ENCODE measurements at regions of chr12 and their contacts with region 1.

Region 1: GRCh38 chr12:50314629-50315312 is 31.5 kb upstream of the LIMA1 start:
- DNase-seq: no peak
- ATAC-seq: peak in 1 of 2 donors; percentile 53
- H3K4me3 ChIP-seq: no peak overlapping the region
- H3K27ac ChIP-seq: no peak overlapping the region
- H3K4me1 ChIP-seq: no peaks in the 10 kb centered on the region
- H3K27me3 ChIP-seq: no peaks in the 10 kb centered on the region

Region 2: DNA sequence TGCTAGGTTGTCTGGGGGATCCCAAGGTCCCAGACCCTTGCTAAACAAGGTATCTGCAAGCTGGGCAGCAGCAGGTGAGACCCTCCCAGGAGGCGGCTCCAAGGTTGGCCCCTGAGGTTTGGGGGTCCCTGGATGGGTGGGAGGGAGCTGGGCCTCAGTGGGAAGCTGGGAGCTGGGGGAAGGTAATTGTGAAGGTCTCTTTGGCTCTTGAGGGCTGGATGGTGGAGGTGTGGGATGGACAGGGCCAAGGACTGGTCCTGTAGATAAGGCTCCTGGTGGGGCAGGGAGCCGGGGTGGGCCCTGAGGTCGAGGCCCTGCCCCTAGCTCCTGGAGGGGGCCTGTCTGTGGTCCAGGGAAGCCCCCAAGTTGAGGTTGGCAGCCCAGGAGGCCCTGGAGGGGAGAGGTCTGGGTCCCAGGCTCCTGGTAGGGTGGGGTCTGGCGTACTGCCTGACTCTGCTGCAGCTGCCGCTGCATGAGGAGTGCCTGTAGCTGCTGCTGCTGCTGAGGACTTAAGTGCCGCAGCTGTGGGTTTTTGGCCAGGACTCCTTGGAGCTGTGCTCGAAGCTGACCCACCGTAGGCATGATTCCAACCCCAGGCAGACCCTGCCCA is 1283.1 kb before region 1 on chr12:
- intact Hi-C with region 1: no loop called
- DNase-seq: peak in 1 of 3 donors; percentile 49
- ATAC-seq: peak; percentile 5 to 17
- H3K4me3 ChIP-seq: no peak overlapping the region
- H3K27ac ChIP-seq: no peak overlapping the region
- H3K4me1 ChIP-seq: no peaks in the 10 kb centered on the region
- H3K27me3 ChIP-seq: no peaks in the 10 kb centered on the region

Region 3: GRCh38 chr12:50187084-50187900 is 127.5 kb before region 1 on chr12:
- intact Hi-C with region 1: loop called in 1 of 4 experiments (anchors 10 kb)
- DNase-seq: no peak
- ATAC-seq: peak; percentile 15 to 19
- H3K4me3 ChIP-seq: no peak overlapping the region
- H3K27ac ChIP-seq: no peak overlapping the region
- H3K4me1 ChIP-seq: peaks cover 6% of the 10 kb centered on the region
- H3K27me3 ChIP-seq: no peaks in the 10 kb centered on the region

Region 4: DNA sequence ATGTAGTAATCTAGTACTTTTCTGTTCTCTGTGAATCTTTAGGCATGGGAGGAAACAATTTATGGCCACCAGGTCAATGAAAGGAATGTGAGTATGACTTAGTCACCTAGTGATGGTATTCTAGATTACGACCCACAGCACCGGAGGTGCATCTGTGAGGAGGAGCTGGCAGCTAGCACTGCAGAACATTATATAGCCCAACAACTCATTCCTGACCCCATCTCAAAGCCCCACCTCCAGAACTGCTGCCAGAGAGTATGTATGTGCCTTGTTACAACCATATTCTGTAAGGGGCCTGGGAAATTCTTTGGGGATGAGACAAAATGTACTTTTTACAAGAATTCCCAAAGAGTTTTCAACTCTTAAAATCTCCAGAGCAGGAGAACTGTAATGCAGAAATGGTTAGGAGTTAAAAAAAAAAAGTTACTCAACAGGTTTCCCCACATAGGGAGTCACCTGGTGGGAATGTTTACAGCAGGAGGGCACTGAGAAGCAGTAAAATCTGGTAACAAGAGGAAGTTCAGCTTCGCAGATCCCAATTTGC is 112.7 kb before region 1 on chr12:
- intact Hi-C with region 1: loop called in 1 of 4 experiments (anchors 10 kb)
- DNase-seq: no peak
- ATAC-seq: no peak
- H3K4me3 ChIP-seq: no peak overlapping the region
- H3K27ac ChIP-seq: no peak overlapping the region
- H3K4me1 ChIP-seq: no peaks in the 10 kb centered on the region
- H3K27me3 ChIP-seq: no peaks in the 10 kb centered on the region

Region 5: GRCh38 chr12:50211392-50212070 is 103.2 kb before region 1 on chr12:
- intact Hi-C with region 1: loop called in 2 of 4 experiments (anchors 10 kb)
- DNase-seq: no peak
- ATAC-seq: peak; percentile 60 to 70
- H3K4me3 ChIP-seq: no peak overlapping the region
- H3K27ac ChIP-seq: peak overlapping the region; percentile 57
- H3K4me1 ChIP-seq: peaks cover 2% of the 10 kb centered on the region
- H3K27me3 ChIP-seq: no peaks in the 10 kb centered on the region

Measured in right cardiac atrium (tissue), 5 donors.